ENCODE measurements at regions of chr13 and their contacts with region 1.

Region 1: DNA sequence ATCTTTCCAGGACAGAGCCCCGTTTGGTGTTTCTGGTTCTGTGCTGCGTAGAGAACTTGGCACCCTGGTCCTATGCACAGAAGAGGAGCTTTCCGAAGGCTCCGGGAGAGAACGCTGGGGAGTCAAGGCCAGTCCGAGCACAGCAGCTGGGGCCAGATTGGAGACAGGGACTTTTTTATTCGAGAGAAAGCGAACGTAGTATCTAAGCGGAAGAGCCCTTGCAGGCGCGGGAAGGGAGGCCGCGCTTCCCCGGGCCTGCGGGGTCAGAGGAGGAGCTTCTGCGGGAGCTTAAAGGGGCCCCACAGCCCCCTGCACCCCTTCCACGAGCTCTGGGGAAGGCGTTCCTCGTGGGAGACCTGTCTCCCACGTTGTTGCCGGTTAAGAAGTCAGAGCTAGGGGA is 48.6 kb upstream of the ARHGEF7 start:
- DNase-seq: no peak
- ATAC-seq: peak; percentile 55

Region 2: GRCh38 chr13:111228262-111229144 is 162.0 kb after region 1 on chr13:
- intact Hi-C with region 1: loop called (anchors 5 kb)
- DNase-seq: no peak
- ATAC-seq: no peak

Measured in Right ventricle myocardium superior (tissue), 1 donor.